Heart left ventricle (tissue), 16 donors: ENCODE measurements at regions of chr3 and their contacts with region 1.

Region 1: DNA sequence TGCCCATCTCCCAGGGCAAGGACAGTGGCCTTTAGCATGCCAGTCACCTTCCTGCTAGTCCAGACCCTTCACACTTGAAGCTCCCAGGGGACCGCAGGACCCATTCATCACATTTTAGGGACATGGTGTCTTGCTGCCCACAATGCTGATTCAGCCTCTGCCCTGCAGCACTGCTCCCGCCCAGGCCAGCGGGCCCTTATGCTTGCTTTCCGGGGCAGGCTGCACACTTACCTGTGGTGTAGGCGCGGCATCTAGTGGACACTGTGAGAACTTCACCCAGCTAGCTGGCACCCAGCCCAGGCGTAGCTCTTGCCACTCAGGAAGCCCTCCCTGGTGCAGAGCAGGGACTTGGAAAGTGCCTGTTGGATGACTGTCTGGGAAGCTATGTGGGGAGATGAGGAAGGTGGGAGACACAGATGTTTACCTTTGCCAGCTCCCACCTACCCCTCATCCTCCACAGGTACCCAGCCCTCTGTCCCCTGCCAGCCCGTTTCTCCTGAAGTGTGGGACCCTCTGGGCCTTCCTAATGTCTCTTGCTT is 26.2 kb upstream of the NR2C2 start:
- DNase-seq: peak; percentile 87 to 94 (median 87)
- ATAC-seq: peak; percentile 88 to 94 (median 94)
- H3K4me3 ChIP-seq: no peak overlapping the region
- H3K27ac ChIP-seq: no peak overlapping the region
- H3K4me1 ChIP-seq: peaks cover 0 to 10% (median 6%) of the 10 kb centered on the region in 12 donors
- H3K27me3 ChIP-seq: no peaks in the 10 kb centered on the region
- CTCF ChIP-seq: peak in 11 of 12 donors; percentile 96 to 99 (median 98)
- POLR2A ChIP-seq: no peak

Region 2: DNA sequence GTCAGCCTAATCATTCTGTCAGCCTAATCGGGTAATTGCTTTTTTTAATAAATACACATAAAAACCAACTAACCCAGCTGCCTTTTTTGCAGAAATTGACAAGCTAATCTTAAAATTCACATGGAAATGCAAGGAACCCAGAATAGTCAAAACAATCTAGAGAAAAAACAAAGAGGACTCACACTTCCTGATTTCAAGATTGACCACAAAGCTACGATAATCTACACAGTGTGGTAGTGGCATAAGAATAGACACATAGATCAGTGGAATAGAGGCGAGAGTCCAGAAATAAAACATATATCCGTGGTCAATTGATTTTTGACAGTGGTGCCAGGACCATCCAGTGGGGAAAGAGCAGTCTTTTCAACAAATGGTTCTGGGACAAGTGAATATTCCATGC is 248.6 kb before region 1 on chr3:
- intact Hi-C with region 1: loop called (anchors 1 to 5 kb)
- DNase-seq: no peak
- ATAC-seq: no peak
- H3K4me3 ChIP-seq: no peak overlapping the region
- H3K27ac ChIP-seq: no peak overlapping the region
- H3K4me1 ChIP-seq: no peaks in the 10 kb centered on the region
- H3K27me3 ChIP-seq: no peaks in the 10 kb centered on the region
- CTCF ChIP-seq: no peak
- POLR2A ChIP-seq: no peak

Region 3: DNA sequence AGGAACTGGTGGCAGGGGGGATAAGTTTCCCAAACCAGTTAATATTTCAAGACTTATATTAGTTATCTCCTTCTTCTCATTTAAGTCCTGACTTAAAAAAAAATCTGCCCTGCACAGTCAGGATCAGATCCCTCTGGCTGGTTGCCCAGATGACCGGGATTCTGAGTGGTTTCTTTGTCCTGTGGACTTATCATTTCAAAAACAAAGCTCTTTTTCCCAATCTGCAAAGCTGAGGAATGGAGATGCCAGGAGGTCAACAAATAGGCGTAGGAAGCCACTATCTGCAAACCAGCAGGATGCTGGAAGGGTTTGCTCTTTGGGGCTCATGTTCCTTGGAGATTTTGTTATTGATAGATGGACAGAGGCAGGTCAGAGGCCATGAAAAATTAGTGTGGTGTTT is 240.4 kb before region 1 on chr3:
- intact Hi-C with region 1: loop called in 5 of 10 experiments (anchors 2 to 5 kb)
- DNase-seq: no peak
- ATAC-seq: no peak
- H3K4me3 ChIP-seq: no peak overlapping the region
- H3K27ac ChIP-seq: no peak overlapping the region
- H3K4me1 ChIP-seq: no peaks in the 10 kb centered on the region
- H3K27me3 ChIP-seq: no peaks in the 10 kb centered on the region
- CTCF ChIP-seq: no peak
- POLR2A ChIP-seq: no peak

Region 4: DNA sequence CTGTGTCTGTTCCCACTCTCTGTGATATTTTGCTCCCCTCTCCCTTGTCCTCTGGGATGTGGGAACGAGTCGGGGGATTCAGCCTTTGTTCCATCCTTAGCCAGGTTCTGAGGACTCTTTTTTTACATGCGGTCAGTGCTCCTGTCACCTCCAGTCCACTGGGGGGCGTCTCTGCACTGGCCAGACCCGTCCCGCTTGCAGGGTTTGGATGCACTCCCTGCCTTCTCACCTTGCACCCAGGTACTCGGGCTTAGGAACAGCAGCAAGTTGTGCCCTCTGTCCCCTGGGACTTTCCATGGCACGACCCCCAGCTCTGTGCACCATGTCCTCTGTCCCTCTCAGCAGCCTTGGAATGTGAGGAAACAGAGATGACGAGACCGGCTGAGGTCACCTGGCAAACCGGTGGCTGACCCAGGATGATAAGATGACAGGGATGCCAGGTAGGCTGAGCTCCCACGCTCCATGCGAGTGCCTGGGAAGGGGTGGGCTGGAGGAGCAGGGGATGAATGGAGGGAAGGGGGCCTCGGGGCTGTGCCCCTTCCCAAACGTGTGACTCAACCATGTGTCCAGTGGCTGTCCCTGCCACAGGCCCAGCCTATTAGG is 129.7 kb before region 1 on chr3:
- intact Hi-C with region 1: loop called (anchors 1 to 5 kb)
- DNase-seq: peak; percentile 73 to 81 (median 75)
- ATAC-seq: peak; percentile 48 to 76 (median 69)
- H3K4me3 ChIP-seq: no peak overlapping the region
- H3K27ac ChIP-seq: no peak overlapping the region
- H3K4me1 ChIP-seq: peaks cover 0 to 39% (median 27%) of the 10 kb centered on the region in 12 donors
- H3K27me3 ChIP-seq: peaks cover 0 to 5% (median 0%) of the 10 kb centered on the region in 9 donors
- CTCF ChIP-seq: peak; percentile 59 to 83 (median 70)
- POLR2A ChIP-seq: no peak

Region 5: GRCh38 chr3:15042936-15043335 is 121.8 kb after region 1 on chr3:
- intact Hi-C with region 1: loop called in 2 of 10 experiments (anchors 5 to 10 kb)
- DNase-seq: no peak
- ATAC-seq: no peak
- H3K4me3 ChIP-seq: no peak overlapping the region
- H3K27ac ChIP-seq: no peak overlapping the region
- H3K4me1 ChIP-seq: peaks cover 0 to 34% (median 9%) of the 10 kb centered on the region in 12 donors
- H3K27me3 ChIP-seq: no peaks in the 10 kb centered on the region
- CTCF ChIP-seq: no peak
- POLR2A ChIP-seq: no peak

Region 6: GRCh38 chr3:15064835-15065549 is 143.8 kb after region 1 on chr3 and contains the start of gene MRPS25:
- intact Hi-C with region 1: loop called in 1 of 10 experiments (anchors 10 kb)
- DNase-seq: peak; percentile 90 to 95 (median 93)
- ATAC-seq: peak; percentile 89 to 97 (median 97)
- H3K4me3 ChIP-seq: peak within 1 kb of the TSS; percentile 69 to 97 (median 84)
- H3K27ac ChIP-seq: peak within 1 kb of the TSS; percentile 58 to 93 (median 89)
- H3K4me1 ChIP-seq: peaks cover 0 to 24% (median 15%) of the 10 kb centered on the region in 12 donors
- H3K27me3 ChIP-seq: no peaks in the 10 kb centered on the region
- CTCF ChIP-seq: peak in 1 of 12 donors; percentile 8
- POLR2A ChIP-seq: peak; percentile 59 to 93
- total RNA-seq, gene MRPS25: 80.9 to 133 (median 88.8) TPM

Region 7: DNA sequence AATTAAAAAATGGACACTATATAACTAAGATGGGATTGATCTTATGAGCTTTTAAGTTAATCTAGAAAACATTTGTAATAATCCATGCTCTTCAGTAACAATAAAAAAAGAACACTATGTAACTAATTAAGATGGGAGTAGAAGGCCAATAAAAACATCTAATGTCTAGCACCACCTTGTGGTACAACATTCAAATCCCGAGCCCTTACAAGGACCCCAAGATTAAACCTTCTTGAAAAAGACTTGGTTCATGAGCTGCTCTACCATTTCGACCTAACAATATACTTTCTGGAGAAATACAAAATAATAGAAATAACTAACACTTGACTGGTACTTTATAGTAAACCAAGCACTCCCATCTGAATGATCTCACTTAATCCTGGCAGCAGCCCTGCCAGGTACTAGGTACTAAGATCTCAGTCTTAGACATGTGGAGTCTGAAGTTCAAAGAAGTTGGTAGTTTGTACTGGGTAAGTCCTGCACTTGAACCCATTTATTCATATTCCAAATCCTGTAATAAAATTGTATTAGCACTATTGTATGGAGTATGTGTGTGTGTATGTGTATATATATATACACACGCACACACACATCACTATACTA is 484.4 kb after region 1 on chr3:
- intact Hi-C with region 1: loop called in 1 of 10 experiments (anchors 10 kb)
- DNase-seq: no peak
- ATAC-seq: peak in 3 of 4 donors; percentile 49 to 77 (median 68)
- H3K4me3 ChIP-seq: no peak overlapping the region
- H3K27ac ChIP-seq: no peak overlapping the region
- H3K4me1 ChIP-seq: peaks cover 0 to 18% (median 0%) of the 10 kb centered on the region in 12 donors
- H3K27me3 ChIP-seq: no peaks in the 10 kb centered on the region
- CTCF ChIP-seq: peak; percentile 49 to 74 (median 64)
- POLR2A ChIP-seq: no peak